Left lung (tissue), 14 donors: ENCODE measurements at regions of chr1 and their contacts with region 1.

Region 1: GRCh38 chr1:160006312-160006940 is 25.4 kb downstream of the PIGM start:
- DNase-seq: peak in 3 of 4 donors; percentile 68 to 89 (median 68)
- ATAC-seq: peak; percentile 89
- H3K4me3 ChIP-seq: no peak overlapping the region
- H3K27ac ChIP-seq: no peak overlapping the region
- H3K4me1 ChIP-seq: no peaks in the 10 kb centered on the region
- H3K27me3 ChIP-seq: no peaks in the 10 kb centered on the region
- CTCF ChIP-seq: peak; percentile 77 to 80

Region 2: GRCh38 chr1:159936273-159936904 is 70.0 kb before region 1 on chr1:
- intact Hi-C with region 1: loop called (anchors 5 to 10 kb)
- DNase-seq: peak; percentile 45 to 92 (median 62)
- ATAC-seq: peak; percentile 94
- H3K4me3 ChIP-seq: no peak overlapping the region
- H3K27ac ChIP-seq: no peak overlapping the region
- H3K4me1 ChIP-seq: peaks cover 11 to 23% of the 10 kb centered on the region in 2 donors
- H3K27me3 ChIP-seq: no peaks in the 10 kb centered on the region
- CTCF ChIP-seq: peak; percentile 98 to 99

Region 3: GRCh38 chr1:159945483-159946241 is 60.8 kb before region 1 on chr1 and contains the start of gene IGSF9:
- intact Hi-C with region 1: loop called in 1 of 2 experiments (anchors 10 kb)
- DNase-seq: peak; percentile 76 to 94 (median 86)
- ATAC-seq: peak; percentile 93
- H3K4me3 ChIP-seq: peak within 1 kb of the TSS; percentile 39 to 42
- H3K27ac ChIP-seq: no peak within 1 kb of the TSS
- H3K4me1 ChIP-seq: peaks cover 0 to 17% of the 10 kb centered on the region in 2 donors
- H3K27me3 ChIP-seq: peaks cover 0 to 40% of the 10 kb centered on the region in 2 donors
- CTCF ChIP-seq: peak in 1 of 2 donors; percentile 31
- polyA plus RNA-seq, gene IGSF9: 12.2 to 16.9 (median 14.6) TPM

Region 4: DNA sequence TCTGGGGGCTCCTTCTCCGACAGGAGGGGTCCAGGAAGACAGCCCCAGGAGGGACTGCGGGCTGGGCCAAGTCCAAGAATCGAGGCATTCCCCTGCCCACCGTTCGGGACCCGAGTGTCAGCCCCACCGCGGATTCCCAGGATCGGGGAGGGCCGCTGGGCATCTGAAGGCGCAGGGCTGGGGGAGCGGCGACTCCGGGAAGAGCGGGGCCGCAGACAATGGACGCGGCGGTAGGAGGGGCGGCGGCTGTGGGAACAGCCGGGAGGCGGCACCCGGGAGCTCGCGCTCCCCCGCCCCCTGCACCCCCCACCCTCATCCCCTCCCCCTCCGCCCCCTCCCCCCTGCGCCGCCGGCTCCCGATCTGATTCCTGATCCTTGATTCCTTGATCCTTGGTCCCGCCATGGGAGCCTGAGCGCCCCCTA is 393.8 kb after region 1 on chr1 and contains the start of gene VANGL2:
- intact Hi-C with region 1: no loop called
- DNase-seq: peak; percentile 72 to 93 (median 82)
- ATAC-seq: peak; percentile 94
- H3K4me3 ChIP-seq: peak within 1 kb of the TSS; percentile 48 to 57
- H3K27ac ChIP-seq: peak within 1 kb of the TSS; percentile 3 to 48
- H3K4me1 ChIP-seq: peaks cover 0 to 26% of the 10 kb centered on the region in 2 donors
- H3K27me3 ChIP-seq: peaks cover 0 to 36% of the 10 kb centered on the region in 2 donors
- CTCF ChIP-seq: no peak
- polyA plus RNA-seq, gene VANGL2: 35.6 to 42.7 (median 38.5) TPM